Aorta (tissue), 5 donors: ENCODE measurements at regions of chr4 and their contacts with region 1.

Region 1: DNA sequence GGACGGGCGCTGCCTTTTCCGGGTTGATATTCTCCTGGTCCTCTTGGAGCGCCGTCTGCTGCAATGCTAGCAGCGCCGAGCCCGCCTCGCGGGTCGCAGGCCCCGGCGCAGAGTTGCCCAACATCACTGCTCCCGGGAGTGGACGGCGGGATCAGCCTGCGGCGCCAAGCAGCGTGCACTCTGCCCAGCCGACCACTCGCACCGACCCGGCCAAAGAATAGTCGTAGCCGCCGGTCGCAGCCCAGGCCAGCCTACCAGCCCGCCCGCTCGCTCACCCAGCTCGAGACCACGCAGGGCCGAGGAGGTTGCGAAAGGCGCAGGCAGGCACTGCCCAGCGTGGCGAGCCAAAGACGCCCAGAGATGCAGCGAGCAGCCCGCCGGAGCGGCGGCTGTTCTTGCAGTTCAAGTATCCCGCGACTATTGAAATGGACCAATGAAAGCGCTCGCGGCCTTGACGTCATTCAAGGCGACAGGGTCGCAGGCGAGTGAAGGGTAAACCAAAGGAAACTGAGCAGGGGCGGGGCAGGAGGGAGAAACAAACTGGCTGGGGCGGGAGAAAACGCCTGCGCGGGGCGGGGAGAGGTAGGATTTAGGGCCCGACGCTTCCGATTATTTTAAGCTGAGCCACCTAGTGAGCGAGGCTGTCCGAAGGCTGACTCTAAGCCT is at the start of gene CCNA2:
- DNase-seq: peak; percentile 98 to 99
- ATAC-seq: peak; percentile 100
- H3K4me3 ChIP-seq: peak within 1 kb of the TSS; percentile 47 to 61
- H3K27ac ChIP-seq: no peak within 1 kb of the TSS
- H3K4me1 ChIP-seq: no peaks in the 10 kb centered on the region
- H3K27me3 ChIP-seq: no peaks in the 10 kb centered on the region
- total RNA-seq, gene CCNA2: 0.88 to 2.6 TPM

Region 2: GRCh38 chr4:121869841-121870656 is 46.4 kb after region 1 on chr4 and contains the start of gene BBS7:
- intact Hi-C with region 1: loop called (anchors 1 to 5 kb)
- DNase-seq: peak; percentile 99 to 100
- ATAC-seq: peak; percentile 99
- H3K4me3 ChIP-seq: peak within 1 kb of the TSS; percentile 70 to 88
- H3K27ac ChIP-seq: peak within 1 kb of the TSS; percentile 54 to 88
- H3K4me1 ChIP-seq: no peaks in the 10 kb centered on the region
- H3K27me3 ChIP-seq: no peaks in the 10 kb centered on the region
- total RNA-seq, gene BBS7: 16.6 to 17.5 TPM